Motor neuron (in vitro differentiated cells): ENCODE measurements at regions of chr1 and their contacts with region 1.

Region 1: DNA sequence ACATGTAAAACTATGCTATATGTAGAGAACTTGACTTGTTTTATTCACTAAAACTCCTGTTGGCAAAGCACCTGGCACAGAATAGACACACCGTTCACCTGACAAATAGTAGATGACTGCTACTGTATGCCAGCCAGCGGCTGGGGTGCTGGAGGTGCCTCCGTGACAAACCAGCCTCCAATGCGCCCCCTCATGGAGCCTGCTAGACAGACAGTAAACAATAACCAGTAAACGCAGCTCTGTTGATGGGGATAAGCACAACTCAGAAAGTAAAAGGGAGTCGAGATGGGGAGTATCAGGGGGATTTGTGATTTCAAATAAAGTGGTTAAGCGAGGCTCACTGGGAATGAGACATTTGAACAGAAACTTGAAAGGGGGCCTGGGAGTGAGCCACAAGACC is 107.2 kb downstream of the PRDM2 start:
- ATAC-seq: peak in 2 of 8 experiments; percentile 35 to 61
- H3K4me3 ChIP-seq: no peak overlapping the region
- H3K27ac ChIP-seq: no peak overlapping the region
- H3K4me1 ChIP-seq: no peaks in the 10 kb centered on the region

Region 2: GRCh38 chr1:13675151-13675651 is 132.0 kb before region 1 on chr1:
- in situ Hi-C with region 1: loop called in 3 of 9 experiments (anchors 10 to 25 kb)
- ATAC-seq: no peak
- H3K4me3 ChIP-seq: no peak overlapping the region
- H3K27ac ChIP-seq: no peak overlapping the region
- H3K4me1 ChIP-seq: no peaks in the 10 kb centered on the region